Activated naive CD4-positive, alpha-beta T cell treated with anti-CD3 and anti-CD28 coated beads for 36 hours (primary cell): ENCODE measurements at regions of chr13 and their contacts with region 1.

Region 1: DNA sequence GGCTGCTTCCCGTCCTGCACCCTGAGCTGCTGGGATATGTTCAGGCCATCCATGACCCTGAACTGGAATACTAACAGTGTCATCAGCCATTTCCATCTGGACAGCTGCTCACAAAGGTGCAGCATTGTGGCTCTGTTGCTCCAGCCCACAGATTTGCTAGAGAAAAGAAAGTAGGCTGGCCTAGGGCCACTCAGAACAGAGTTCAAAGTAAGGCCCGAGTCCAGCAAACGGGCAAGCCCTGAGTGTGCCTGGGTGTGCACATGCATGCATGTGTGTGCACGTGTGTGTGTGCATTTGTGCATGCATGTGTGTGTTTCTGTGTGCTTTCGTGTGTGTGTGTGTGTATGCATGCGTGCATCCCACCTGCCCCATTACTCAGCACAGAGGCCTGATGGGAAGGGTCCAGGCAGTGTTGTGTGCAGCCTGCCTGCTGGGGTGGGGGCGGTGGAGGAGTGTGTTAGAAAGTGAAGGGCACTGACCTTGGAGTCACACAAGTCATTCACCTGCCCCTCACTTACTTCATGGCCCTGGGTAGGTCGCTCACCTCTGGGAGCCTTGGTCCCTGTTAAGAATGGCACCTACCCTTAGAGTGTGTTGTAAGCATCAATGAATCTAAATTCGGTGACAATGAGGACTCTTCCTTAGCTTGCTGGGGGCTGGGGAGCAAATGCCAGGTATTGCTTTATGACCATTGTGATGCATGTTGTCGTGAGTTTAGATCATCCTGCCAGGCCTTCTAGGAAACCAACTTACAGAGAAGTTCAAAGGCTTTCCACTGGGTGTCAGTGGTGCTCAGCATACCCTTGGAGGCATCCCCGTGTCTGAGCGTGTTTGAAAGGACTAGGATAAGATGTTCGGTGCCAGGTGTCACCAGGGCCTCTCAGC is 53.2 kb downstream of the GPR12 start:
- DNase-seq: peak; percentile 60
- H3K4me3 Mint-ChIP-seq: no peak overlapping the region
- H3K27ac Mint-ChIP-seq: no peak overlapping the region
- H3K4me1 Mint-ChIP-seq: no peaks in the 10 kb centered on the region
- H3K27me3 Mint-ChIP-seq: no peaks in the 10 kb centered on the region

Region 2: GRCh38 chr13:26117620-26118019 is 589.7 kb before region 1 on chr13:
- CTCF ChIA-PET with region 1: no interaction called
- intact Hi-C with region 1: no loop called
- DNase-seq: no peak
- H3K4me3 Mint-ChIP-seq: no peak overlapping the region
- H3K27ac Mint-ChIP-seq: peak overlapping the region; percentile 9
- H3K4me1 Mint-ChIP-seq: no peaks in the 10 kb centered on the region
- H3K27me3 Mint-ChIP-seq: peaks cover 18% of the 10 kb centered on the region

Region 3: GRCh38 chr13:26785838-26786630 is 78.7 kb after region 1 on chr13:
- CTCF ChIA-PET with region 1: interaction called, 3 read pairs
- intact Hi-C with region 1: loop called (anchors 1 kb)
- DNase-seq: peak; percentile 70
- H3K4me3 Mint-ChIP-seq: peak overlapping the region; percentile 75
- H3K27ac Mint-ChIP-seq: no peak overlapping the region
- H3K4me1 Mint-ChIP-seq: peaks cover 13% of the 10 kb centered on the region
- H3K27me3 Mint-ChIP-seq: no peaks in the 10 kb centered on the region

Region 4: DNA sequence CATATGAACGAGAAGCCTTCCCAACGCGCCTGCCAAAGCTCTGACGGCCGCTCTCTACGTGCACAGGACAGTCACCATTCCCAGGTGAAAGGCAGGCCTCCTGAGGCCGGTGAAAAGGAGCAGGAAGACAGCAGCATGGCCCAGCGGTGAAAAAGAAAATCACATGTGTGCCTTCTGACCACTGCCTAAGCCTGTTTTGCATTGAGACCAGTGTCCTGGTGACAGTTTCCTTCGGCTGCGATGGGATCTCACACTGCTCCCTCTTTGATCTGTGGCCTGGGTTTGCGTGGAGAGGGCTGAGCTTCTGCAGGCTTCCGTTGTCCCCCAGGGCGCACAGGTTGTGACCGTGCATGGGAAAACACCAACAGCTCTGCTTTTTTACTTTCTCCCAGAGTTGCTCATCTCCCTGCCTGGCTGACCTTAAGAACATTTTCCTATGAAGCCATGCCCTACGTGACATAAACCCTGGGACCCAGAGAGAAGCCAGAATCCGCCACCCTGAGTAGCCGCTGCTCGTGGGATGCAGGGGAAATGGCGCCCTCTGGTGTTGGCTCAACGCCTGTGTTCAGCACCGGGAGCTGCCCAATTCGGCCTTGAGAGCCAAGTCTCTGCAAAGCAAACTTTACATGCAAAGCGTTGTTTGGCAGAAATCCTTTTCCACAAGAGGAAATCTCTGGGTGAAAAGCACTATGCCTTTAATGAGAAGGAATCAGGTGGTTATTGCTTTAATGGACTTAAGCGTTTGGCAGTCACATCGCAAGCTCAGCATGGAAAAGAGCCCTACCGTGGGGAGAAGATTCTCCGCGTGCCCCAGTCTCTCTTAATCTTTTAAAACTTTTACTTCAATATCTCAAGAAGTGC is 165.4 kb after region 1 on chr13:
- CTCF ChIA-PET with region 1: interaction called, 19 read pairs
- intact Hi-C with region 1: loop called (anchors 1 kb)
- DNase-seq: peak; percentile 74
- H3K4me3 Mint-ChIP-seq: no peak overlapping the region
- H3K27ac Mint-ChIP-seq: no peak overlapping the region
- H3K4me1 Mint-ChIP-seq: no peaks in the 10 kb centered on the region
- H3K27me3 Mint-ChIP-seq: peaks cover 5% of the 10 kb centered on the region

Region 5: DNA sequence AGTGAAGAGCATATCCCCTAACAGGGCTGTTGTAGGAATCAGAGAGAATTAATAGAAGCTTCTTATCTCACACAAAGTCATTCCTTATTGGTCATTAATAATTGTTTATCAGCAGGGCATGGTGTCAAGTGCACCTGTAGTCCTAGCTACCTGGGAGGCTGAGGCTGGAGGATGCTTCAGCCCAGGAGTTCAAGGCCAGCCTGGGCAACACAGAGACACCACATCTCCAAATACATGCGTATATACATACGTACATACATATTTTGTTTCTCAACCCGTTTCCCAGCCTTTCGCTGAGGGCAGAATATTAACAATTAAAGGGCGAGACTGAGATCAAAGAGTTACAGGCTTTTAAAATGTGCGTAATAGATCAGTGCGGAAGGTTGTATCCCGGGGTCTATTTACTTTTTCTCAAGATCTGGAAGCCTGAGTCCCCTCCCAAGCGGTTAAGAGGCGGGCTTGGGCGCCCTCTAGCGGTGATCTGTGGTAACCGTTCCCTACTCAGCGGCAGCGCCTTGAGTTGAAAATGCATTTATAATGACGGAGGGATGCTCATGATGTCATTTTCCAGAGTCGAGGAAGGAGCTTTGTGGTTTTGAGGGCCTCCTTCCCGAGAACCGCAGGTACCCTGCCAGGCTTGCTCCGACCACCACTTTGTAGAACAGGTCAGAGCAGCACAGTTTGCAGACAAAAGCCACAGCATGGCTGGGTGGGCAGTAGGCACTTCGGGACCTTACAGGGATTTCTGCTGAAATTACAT is 222.8 kb after region 1 on chr13:
- CTCF ChIA-PET with region 1: interaction called, 10 read pairs
- intact Hi-C with region 1: loop called (anchors 1 kb)
- DNase-seq: peak; percentile 79
- H3K4me3 Mint-ChIP-seq: no peak overlapping the region
- H3K27ac Mint-ChIP-seq: no peak overlapping the region
- H3K4me1 Mint-ChIP-seq: no peaks in the 10 kb centered on the region
- H3K27me3 Mint-ChIP-seq: peaks cover 3% of the 10 kb centered on the region